PC-9 (cell line): ENCODE measurements at regions of chr3 and their contacts with region 1.

Region 1: GRCh38 chr3:194682694-194683310 is 2.9 kb upstream of the FAM43A start:
- DNase-seq: peak; percentile 82 to 94
- H3K4me3 ChIP-seq: no peak overlapping the region
- H3K27ac ChIP-seq: 0 out of 2 replicates have a peak overlapping the region, but pooled peaks have one; percentile 13
- H3K4me1 ChIP-seq: peaks cover 19% of the 10 kb centered on the region
- H3K27me3 ChIP-seq: no peaks in the 10 kb centered on the region
- CTCF ChIP-seq: peak; percentile 81

Region 2: DNA sequence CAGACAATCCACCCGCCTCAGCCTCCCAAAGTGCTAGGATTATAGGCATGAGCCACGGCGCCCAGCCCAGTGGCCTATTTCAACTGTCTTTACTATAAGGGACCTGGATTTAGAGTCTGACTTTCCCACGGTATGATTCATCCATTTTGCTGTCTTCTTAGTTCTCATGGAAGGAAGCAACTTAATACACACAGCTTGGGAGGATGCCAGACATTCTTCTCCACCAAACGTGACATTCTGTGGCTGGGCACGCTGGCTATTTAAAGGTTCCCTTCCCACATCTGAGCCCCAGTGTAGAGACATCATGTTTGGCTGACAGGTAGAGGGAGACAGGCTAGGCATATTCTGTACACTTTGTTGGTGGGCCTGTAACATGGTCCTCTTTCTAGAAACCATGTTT is 29.1 kb after region 1 on chr3:
- CTCF ChIA-PET with region 1: interaction called, 6 read pairs
- POLR2A ChIA-PET with region 1: interaction called, 6 read pairs
- intact Hi-C with region 1: loop called (anchors 1 kb)
- DNase-seq: peak; percentile 89 to 99
- H3K4me3 ChIP-seq: no peak overlapping the region
- H3K27ac ChIP-seq: peak overlapping the region; percentile 54
- H3K4me1 ChIP-seq: peaks cover 47% of the 10 kb centered on the region
- H3K27me3 ChIP-seq: no peaks in the 10 kb centered on the region
- CTCF ChIP-seq: no peak

Region 3: DNA sequence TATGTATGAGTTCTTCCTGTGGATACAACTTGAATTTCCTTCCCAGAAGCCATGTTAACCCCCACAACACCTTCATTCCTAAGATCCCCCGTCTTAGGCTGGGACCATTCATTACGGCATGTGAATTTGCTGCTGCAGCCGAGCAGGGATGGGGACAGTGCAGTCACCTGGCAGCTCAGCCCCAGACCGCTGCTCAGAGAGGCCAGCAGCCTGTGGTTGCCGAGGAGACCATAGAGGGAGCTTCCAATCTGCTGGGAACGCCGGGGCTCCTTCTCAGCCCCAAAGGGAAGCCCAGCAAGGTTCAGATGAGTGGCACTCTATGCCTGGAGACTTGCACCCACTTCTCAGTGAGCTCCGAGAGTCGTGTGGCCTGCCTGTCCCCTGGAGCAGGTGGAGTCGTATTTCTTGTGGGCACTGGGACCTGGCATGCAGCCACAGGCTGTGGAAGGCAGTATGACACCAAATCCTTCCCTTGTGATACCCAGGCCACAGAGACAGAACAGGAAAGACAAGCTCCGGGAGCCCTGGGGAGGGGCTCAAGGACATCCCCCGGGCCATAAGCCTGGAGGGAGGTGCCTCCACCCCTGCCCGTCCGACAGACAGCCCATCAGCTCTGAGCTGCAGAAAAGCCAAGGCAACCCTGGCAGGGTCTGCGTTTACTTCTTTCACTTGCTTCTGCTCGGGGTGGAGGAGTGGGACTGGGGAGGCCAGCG is 170.2 kb after region 1 on chr3:
- CTCF ChIA-PET with region 1: interaction called, 7 read pairs
- POLR2A ChIA-PET with region 1: interaction called, 5 read pairs
- intact Hi-C with region 1: loop called (anchors 1 kb)
- DNase-seq: peak; percentile 70 to 92
- H3K4me3 ChIP-seq: no peak overlapping the region
- H3K27ac ChIP-seq: no peak overlapping the region
- H3K4me1 ChIP-seq: peaks cover 11% of the 10 kb centered on the region
- H3K27me3 ChIP-seq: no peaks in the 10 kb centered on the region
- CTCF ChIP-seq: no peak

Region 4: DNA sequence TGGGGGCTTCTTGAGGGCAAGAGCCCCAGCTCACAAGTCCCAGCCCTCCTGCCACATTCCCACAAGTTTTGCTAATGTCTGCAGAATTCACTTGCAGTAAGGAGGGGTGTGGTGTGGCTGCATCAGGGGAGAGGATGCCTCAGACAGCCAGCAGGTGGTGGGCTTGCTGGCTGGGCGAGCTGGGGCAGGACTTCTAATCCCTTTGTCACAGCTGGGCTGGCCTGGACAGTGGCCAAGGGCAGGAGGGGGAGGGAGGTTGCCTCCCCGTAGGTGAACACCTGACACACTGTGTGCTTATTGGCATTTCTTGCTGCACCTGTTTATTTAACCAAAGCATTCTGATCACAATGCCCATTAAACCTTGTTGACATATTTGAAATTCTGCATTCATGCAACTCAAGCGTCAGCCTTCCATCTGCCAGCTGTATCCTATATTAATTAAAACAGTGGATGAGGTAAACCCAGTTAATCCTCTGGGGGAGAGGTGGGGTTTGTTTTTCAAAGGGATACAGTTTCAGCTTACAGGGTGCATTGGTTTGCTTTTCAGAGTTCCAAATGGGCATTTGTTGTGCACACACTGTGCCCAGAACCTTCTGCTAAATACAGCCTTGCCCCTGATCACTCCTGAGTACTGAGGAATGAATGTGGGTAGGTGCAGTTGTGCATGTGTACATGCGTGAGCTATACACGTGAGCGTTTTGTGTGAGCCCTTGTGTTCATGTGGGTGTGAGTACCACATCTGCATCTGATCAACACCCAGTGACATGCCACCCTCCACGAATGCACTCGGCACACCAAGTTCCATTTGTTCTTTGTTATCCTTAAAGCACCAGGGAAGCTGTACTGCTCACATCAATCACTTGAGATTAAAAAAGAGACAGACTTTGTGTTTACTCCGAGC is 319.4 kb after region 1 on chr3:
- CTCF ChIA-PET with region 1: interaction called, 5 read pairs
- POLR2A ChIA-PET with region 1: no interaction called
- intact Hi-C with region 1: loop called (anchors 1 kb)
- DNase-seq: peak; percentile 90 to 92
- H3K4me3 ChIP-seq: no peak overlapping the region
- H3K27ac ChIP-seq: no peak overlapping the region
- H3K4me1 ChIP-seq: peaks cover 25% of the 10 kb centered on the region
- H3K27me3 ChIP-seq: no peaks in the 10 kb centered on the region
- CTCF ChIP-seq: peak; percentile 85

Region 5: DNA sequence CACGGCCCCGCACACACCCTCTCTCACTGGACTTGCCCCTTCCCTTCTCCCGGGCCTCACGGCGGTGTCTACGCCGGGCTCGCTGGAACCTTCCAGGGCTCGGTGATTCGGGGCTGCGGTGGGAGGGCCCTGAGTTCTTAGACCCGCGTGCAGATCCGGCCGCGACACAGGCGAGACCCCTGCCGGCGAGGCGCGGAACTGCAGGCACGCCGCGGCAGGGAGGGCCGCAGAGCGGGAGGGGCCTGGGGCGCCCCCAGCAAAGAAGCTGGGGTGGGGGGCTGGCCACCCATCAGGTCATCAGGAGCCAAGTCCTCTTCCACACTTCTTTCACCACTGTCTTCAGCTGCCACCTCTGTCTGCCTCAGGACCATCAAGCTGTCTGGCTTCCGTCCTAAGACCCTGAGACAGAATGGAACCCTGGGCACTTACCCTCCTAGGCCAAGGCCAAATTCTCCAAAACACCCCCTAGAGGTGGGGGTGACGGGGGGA is 423.7 kb after region 1 on chr3:
- CTCF ChIA-PET with region 1: interaction called, 6 read pairs
- POLR2A ChIA-PET with region 1: no interaction called
- intact Hi-C with region 1: loop called (anchors 1 kb)
- DNase-seq: peak in 1 of 2 experiments; percentile 72
- H3K4me3 ChIP-seq: no peak overlapping the region; the same call in 1 of the 2 replicates
- H3K27ac ChIP-seq: no peak overlapping the region
- H3K4me1 ChIP-seq: peaks cover 40% of the 10 kb centered on the region
- H3K27me3 ChIP-seq: no peaks in the 10 kb centered on the region
- CTCF ChIP-seq: peak; percentile 100

Region 6: GRCh38 chr3:195182470-195182795 is 499.6 kb after region 1 on chr3:
- CTCF ChIA-PET with region 1: interaction called, 10 read pairs
- POLR2A ChIA-PET with region 1: no interaction called
- intact Hi-C with region 1: no loop called
- DNase-seq: no peak
- H3K4me3 ChIP-seq: no peak overlapping the region
- H3K27ac ChIP-seq: no peak overlapping the region
- H3K4me1 ChIP-seq: peaks cover 23% of the 10 kb centered on the region
- H3K27me3 ChIP-seq: no peaks in the 10 kb centered on the region
- CTCF ChIP-seq: no peak

Region 7: GRCh38 chr3:195522254-195523023 is 839.6 kb after region 1 on chr3:
- CTCF ChIA-PET with region 1: no interaction called
- POLR2A ChIA-PET with region 1: no interaction called
- intact Hi-C with region 1: loop called (anchors 1 kb)
- DNase-seq: peak in 1 of 2 experiments; percentile 46
- H3K4me3 ChIP-seq: no peak overlapping the region
- H3K27ac ChIP-seq: no peak overlapping the region
- H3K4me1 ChIP-seq: no peaks in the 10 kb centered on the region
- H3K27me3 ChIP-seq: no peaks in the 10 kb centered on the region
- CTCF ChIP-seq: peak; percentile 98